ENCODE measurements at regions of chr11 and their contacts with region 1.

Region 1: GRCh38 chr11:22625448-22626287 is at the start of gene FANCF:
- DNase-seq: peak; percentile 98
- H3K4me3 Mint-ChIP-seq: peak within 1 kb of the TSS; percentile 99
- H3K27ac Mint-ChIP-seq: peak within 1 kb of the TSS; percentile 99
- H3K4me1 Mint-ChIP-seq: peaks cover 23% of the 10 kb centered on the region
- H3K27me3 Mint-ChIP-seq: no peaks in the 10 kb centered on the region
- total RNA-seq, gene FANCF: 17.2 and 19.1 TPM in 2 replicates

Region 2: GRCh38 chr11:22331771-22332170 is 293.9 kb before region 1 on chr11:
- intact Hi-C with region 1: no loop called
- DNase-seq: no peak
- H3K4me3 Mint-ChIP-seq: no peak overlapping the region
- H3K27ac Mint-ChIP-seq: no peak overlapping the region
- H3K4me1 Mint-ChIP-seq: no peaks in the 10 kb centered on the region
- H3K27me3 Mint-ChIP-seq: peaks cover 2% of the 10 kb centered on the region

Region 3: GRCh38 chr11:22466809-22467208 is 158.9 kb before region 1 on chr11:
- intact Hi-C with region 1: no loop called
- DNase-seq: no peak
- H3K4me3 Mint-ChIP-seq: no peak overlapping the region
- H3K27ac Mint-ChIP-seq: no peak overlapping the region
- H3K4me1 Mint-ChIP-seq: no peaks in the 10 kb centered on the region
- H3K27me3 Mint-ChIP-seq: no peaks in the 10 kb centered on the region

Region 4: DNA sequence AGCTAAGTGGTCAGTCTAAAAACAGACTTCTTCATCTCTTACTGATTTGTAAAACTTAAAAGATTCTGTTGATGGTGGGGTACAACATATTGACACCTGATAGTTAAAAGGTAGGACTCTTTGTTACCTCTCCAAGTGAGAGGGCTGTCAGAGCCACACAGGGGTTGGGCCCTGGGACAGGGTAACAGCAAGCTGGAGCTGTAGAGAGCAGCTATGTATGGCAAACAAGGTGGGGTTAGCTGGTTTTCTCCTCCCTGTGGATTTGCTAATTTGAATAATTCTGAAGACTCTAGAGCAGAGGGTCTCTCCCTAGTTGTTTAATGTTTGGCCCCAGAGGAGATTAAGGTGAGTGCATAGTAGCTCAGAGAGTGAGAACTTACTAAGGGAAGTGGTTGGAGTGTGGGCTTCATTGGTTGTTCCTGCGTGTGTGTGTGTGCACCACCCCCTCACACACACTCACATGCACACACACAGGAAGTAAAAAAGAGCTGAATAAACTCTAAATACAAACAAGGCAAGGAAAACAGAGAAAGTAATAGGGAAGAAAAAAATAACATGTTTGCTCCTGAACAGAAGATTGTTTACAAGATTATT is 31.5 kb after region 1 on chr11:
- intact Hi-C with region 1: loop called (anchors 2 kb)
- DNase-seq: peak; percentile 69
- H3K4me3 Mint-ChIP-seq: peak overlapping the region; percentile 10
- H3K27ac Mint-ChIP-seq: peak overlapping the region; percentile 6
- H3K4me1 Mint-ChIP-seq: peaks cover 14% of the 10 kb centered on the region
- H3K27me3 Mint-ChIP-seq: peaks cover 13% of the 10 kb centered on the region

Region 5: GRCh38 chr11:22703040-22703439 is 77.4 kb after region 1 on chr11:
- intact Hi-C with region 1: loop called (anchors 1 kb)
- DNase-seq: peak; percentile 67
- H3K4me3 Mint-ChIP-seq: peak overlapping the region; percentile 37
- H3K27ac Mint-ChIP-seq: peak overlapping the region; percentile 79
- H3K4me1 Mint-ChIP-seq: peaks cover 11% of the 10 kb centered on the region
- H3K27me3 Mint-ChIP-seq: no peaks in the 10 kb centered on the region

Region 6: DNA sequence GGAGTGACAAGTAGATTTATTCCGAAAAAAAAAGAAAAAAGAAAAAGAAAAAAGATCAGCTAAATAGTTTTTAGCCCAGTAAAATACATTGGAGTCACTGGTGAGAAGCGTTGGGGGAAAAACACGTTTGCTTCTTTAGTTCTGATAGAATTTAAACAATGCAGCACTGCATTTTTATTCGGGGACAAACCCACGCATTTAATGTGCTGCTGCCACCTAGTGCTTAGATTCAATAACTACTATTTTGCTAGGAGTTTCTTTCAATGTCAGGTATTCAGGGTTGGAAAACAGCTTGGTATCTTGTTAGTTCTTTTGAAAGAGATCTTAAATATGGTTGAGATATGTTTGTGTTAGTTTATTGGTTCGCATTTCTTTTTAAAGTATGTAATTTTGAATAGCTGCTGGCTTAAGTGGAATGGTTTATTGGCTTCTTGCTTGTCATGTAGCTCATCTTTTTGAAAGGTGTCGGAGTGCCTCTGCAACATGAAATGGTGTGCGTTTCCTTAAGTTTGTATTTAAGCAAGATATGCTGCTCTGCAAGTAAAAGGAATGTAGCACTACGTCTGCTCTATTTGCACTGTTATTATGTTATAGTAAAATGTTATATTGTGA is 162.0 kb after region 1 on chr11:
- intact Hi-C with region 1: loop called (anchors 5 kb)
- DNase-seq: peak; percentile 78
- H3K4me3 Mint-ChIP-seq: no peak overlapping the region
- H3K27ac Mint-ChIP-seq: no peak overlapping the region
- H3K4me1 Mint-ChIP-seq: no peaks in the 10 kb centered on the region
- H3K27me3 Mint-ChIP-seq: peaks cover 2% of the 10 kb centered on the region

Region 7: GRCh38 chr11:22829231-22830081 is 203.8 kb after region 1 on chr11 and contains the start of gene SVIP:
- intact Hi-C with region 1: loop called (anchors 1 kb)
- DNase-seq: peak; percentile 98
- H3K4me3 Mint-ChIP-seq: peak within 1 kb of the TSS; percentile 95
- H3K27ac Mint-ChIP-seq: peak within 1 kb of the TSS; percentile 92
- H3K4me1 Mint-ChIP-seq: peaks cover 10% of the 10 kb centered on the region
- H3K27me3 Mint-ChIP-seq: no peaks in the 10 kb centered on the region
- total RNA-seq, gene SVIP: 44.5 and 45.4 TPM in 2 replicates

Measured in activated CD4-positive, alpha-beta T cell treated with anti-CD3 and anti-CD28 coated beads, Interleukin-2, amount 10 ng/mL, durations not matched to agents 24 days and 14 days (primary cell).